ENCODE measurements at regions of chr19 and their contacts with region 1.

Region 1: DNA sequence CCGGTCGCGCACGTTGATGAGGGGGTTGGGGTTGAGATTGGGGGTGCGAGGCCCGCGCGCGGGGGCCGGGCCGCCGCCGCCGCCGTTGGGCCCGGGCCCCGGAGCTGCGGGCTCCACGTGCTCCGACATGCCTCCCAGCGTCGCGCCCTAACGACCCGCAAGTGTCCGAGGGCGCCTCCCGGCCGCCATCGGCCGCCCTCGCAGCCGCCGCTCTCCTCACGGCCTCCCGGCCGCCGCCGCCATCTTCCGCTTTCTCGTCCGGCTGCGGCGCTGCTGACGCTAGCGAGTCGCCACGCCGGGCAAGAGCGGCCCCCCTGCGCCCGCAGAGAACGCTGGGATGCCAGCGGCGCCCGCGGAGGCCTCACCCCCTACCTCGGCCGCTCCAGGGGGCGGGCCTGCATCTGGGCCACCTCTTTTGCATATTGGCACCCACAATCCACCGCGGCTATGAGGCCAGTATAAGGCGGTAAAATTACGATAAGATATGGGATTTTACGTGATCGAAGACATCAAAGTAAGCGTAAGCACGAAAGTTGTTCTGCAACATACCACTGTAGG is at the start of gene TMEM259:
- DNase-seq: peak; percentile 95 to 98 (median 97)
- H3K4me3 ChIP-seq: peak within 1 kb of the TSS; percentile 45 to 96 (median 96)
- H3K4me3 Mint-ChIP-seq: peak within 1 kb of the TSS; percentile 88 to 94
- H3K27ac ChIP-seq: peak within 1 kb of the TSS; percentile 84 to 99
- H3K27ac Mint-ChIP-seq: peak within 1 kb of the TSS; percentile 95 to 99 (median 98)
- H3K4me1 ChIP-seq: peaks cover 53 to 55% of the 10 kb centered on the region in 2 donors
- H3K4me1 Mint-ChIP-seq: peaks cover 46% of the 10 kb centered on the region
- H3K27me3 ChIP-seq: no peaks in the 10 kb centered on the region
- H3K27me3 Mint-ChIP-seq: no peaks in the 10 kb centered on the region
- CTCF ChIP-seq: no peak
- polyA plus RNA-seq, gene TMEM259: 37.4 to 417 (median 45.0) TPM

Region 2: DNA sequence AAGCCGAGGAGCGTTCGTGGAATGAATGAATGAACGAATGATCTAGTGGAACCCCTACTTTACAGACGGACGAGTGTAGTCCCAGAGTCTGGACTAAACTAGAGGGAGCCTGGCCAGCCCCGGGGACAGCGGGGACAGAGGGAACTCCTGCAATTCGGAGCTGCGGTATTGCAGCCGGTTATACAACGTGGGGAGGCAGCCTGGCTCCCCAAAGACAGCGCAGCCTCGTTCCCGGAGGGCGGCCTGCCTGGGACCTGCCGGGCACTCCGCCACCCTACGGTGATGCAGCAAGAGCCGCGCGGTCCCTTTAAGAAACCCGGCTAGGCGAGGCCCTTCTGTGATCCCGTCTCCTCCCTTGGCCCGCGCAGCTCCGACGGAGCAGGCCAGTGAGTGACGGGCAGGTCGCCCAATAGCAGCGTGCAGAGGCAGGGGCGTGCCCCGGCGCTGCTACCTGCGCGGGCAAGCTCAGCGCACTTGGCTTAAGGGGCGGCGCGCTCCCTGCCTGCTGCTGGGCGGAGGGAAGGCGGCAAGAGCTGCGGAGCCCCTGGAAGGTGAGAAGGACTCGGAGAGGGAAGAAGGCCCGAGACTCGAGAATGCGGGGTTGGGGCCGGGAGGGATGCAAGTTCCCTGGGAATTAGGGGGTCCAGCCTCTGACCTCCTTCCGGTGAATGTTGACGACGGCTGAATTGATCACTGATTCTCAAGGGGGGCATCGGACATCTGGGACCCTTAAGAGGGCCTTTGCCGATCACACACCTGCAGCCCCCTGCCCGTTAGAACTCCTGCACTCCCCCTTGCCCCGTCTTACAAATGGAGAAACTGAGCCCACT is 18.9 kb after region 1 on chr19 and contains the start of gene ABCA7:
- intact Hi-C with region 1: loop called (anchors 2 kb)
- DNase-seq: peak; percentile 93 to 96 (median 94)
- H3K4me3 ChIP-seq: peak within 1 kb of the TSS; percentile 51 to 92 (median 73)
- H3K4me3 Mint-ChIP-seq: peak within 1 kb of the TSS; percentile 89 to 98
- H3K27ac ChIP-seq: peak within 1 kb of the TSS; percentile 78 to 79
- H3K27ac Mint-ChIP-seq: peak within 1 kb of the TSS; percentile 89 to 97 (median 95)
- H3K4me1 ChIP-seq: peaks cover 49 to 68% of the 10 kb centered on the region in 2 donors
- H3K4me1 Mint-ChIP-seq: peaks cover 57% of the 10 kb centered on the region
- H3K27me3 ChIP-seq: no peaks in the 10 kb centered on the region
- H3K27me3 Mint-ChIP-seq: peaks cover 0 to 1% (median 0%) of the 10 kb centered on the region in 3 donors
- CTCF ChIP-seq: no peak
- polyA plus RNA-seq, gene ABCA7: 1.7 to 104 (median 7.8) TPM

Region 3: GRCh38 chr19:1064661-1065605 is 44.0 kb after region 1 on chr19:
- intact Hi-C with region 1: loop called in 1 of 2 experiments (anchors 5 kb)
- DNase-seq: peak; percentile 71 to 78 (median 76)
- H3K4me3 ChIP-seq: peak overlapping the region in 1 of 3 experiments; percentile 100
- H3K4me3 Mint-ChIP-seq: peak overlapping the region; percentile 37 to 55
- H3K27ac ChIP-seq: no peak overlapping the region
- H3K27ac Mint-ChIP-seq: peak overlapping the region in 3 of 7 donors; percentile 41 to 75 (median 55)
- H3K4me1 ChIP-seq: peaks cover 54 to 65% of the 10 kb centered on the region in 2 donors
- H3K4me1 Mint-ChIP-seq: peaks cover 45% of the 10 kb centered on the region
- H3K27me3 ChIP-seq: no peaks in the 10 kb centered on the region
- H3K27me3 Mint-ChIP-seq: peaks cover 0 to 2% (median 2%) of the 10 kb centered on the region in 3 donors
- CTCF ChIP-seq: peak; percentile 93